ENCODE measurements at regions of chr9 and their contacts with region 1.

Region 1: GRCh38 chr9:84404095-84404686 is 63.6 kb upstream of the SLC28A3 start:
- DNase-seq: no peak
- ATAC-seq: no peak

Region 2: DNA sequence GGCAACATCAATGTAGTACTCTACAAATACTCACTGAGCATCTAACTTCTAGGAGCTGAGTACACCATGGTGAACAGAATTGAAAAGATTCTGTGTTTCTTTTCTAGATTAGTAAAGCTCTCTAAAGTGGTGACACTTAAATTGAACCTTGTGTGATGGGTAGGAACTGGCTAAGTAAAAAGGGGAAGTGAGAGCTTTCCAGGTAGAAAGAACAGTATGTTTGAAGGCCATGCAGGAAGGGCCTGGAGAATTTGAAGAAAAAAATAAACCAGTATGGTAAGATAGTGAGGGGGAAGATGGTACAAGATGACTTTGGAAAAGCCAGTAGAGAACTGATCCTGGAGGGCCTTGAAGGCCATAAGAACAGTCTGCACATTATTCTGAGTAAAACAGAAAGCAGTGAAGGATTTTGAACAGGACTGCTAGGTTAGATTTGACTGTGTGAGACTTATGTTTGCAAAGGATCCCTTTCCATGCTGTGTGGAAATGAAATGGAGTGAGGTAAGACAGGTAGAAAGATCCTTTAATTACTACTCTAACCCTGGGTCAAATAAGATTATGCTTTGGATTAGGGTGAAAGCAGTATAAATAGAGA is 649.7 kb before region 1 on chr9:
- intact Hi-C with region 1: no loop called
- DNase-seq: no peak
- ATAC-seq: no peak

Region 3: DNA sequence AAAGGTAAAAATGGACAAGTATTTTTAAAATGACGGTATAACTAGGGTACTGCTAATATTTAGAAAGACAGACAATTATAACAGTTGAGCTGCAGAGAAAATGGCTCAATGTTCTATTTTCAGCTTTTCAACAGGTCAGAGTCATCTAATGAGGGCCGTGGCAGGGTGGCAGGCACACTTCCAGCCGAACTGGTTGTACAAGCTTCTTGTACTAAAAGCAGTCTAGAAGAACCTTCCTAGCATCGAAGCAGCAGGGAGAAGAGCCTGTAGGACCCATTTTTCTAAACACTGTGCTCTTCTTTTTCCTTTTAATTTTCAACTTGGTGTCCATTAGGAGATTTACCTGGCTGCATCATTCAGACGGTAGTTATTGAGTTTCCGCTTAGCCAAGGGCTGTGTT is 149.2 kb before region 1 on chr9:
- intact Hi-C with region 1: no loop called
- DNase-seq: no peak
- ATAC-seq: peak; percentile 68

Region 4: DNA sequence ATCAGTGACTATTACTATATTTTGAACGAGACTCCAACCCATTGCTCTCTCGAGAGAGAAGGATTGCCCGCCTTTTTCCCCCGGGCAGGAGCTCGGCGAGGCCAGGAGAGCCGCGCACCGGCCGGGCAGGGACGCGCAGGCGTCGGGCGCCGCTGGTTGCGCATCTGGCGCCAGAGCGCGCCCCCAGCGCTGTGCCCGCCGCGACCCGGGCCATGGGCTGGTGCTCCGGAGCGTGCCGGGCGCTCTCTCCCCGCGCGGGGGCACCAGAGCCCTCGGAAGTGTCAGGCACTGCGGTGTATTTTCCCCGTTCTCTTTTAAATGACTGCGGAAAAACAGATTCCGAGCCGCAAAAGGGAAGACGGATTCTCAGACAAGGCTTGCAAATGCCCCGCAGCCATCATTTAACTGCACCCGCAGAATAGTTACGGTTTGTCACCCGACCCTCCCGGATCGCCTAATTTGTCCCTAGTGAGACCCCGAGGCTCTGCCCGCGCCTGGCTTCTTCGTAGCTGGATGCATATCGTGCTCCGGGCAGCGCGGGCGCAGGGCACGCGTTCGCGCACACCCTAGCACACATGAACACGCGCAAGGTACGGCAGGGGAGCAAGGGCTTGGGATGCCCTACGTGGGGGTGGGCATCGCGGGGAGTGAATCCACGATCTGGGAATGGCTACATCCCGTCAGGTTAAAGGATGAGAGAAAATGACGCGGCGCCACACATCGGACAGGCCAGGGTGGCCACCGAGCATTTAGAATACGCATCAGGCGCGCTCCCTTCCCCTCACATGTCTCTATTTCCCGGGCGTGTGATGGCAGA is 264.2 kb after region 1 on chr9:
- intact Hi-C with region 1: loop called (anchors 5 kb)
- DNase-seq: peak; percentile 77
- ATAC-seq: peak; percentile 85

Measured in Right ventricle myocardium inferior (tissue), 1 donor.